Right cardiac atrium (tissue), 5 donors: ENCODE measurements at regions of chr11 and their contacts with region 1.

Region 1: GRCh38 chr11:1050581-1051355 is 14.2 kb upstream of the MUC6 start:
- DNase-seq: peak; percentile 59 to 84 (median 82)
- ATAC-seq: peak; percentile 83 to 84
- H3K4me3 ChIP-seq: no peak overlapping the region
- H3K27ac ChIP-seq: no peak overlapping the region
- H3K4me1 ChIP-seq: no peaks in the 10 kb centered on the region
- H3K27me3 ChIP-seq: no peaks in the 10 kb centered on the region

Region 2: GRCh38 chr11:848380-848931 is 202.3 kb before region 1 on chr11:
- intact Hi-C with region 1: loop called (anchors 2 to 10 kb)
- DNase-seq: peak in 2 of 3 donors; percentile 81 to 84
- ATAC-seq: no peak
- H3K4me3 ChIP-seq: no peak overlapping the region
- H3K27ac ChIP-seq: no peak overlapping the region
- H3K4me1 ChIP-seq: peaks cover 9% of the 10 kb centered on the region
- H3K27me3 ChIP-seq: no peaks in the 10 kb centered on the region

Region 3: GRCh38 chr11:859509-860131 is 191.1 kb before region 1 on chr11:
- intact Hi-C with region 1: loop called in 2 of 4 experiments (anchors 5 to 10 kb)
- DNase-seq: peak; percentile 89 to 96 (median 94)
- ATAC-seq: peak; percentile 62 to 74
- H3K4me3 ChIP-seq: no peak overlapping the region
- H3K27ac ChIP-seq: peak overlapping the region; percentile 1
- H3K4me1 ChIP-seq: peaks cover 2% of the 10 kb centered on the region
- H3K27me3 ChIP-seq: no peaks in the 10 kb centered on the region

Region 4: DNA sequence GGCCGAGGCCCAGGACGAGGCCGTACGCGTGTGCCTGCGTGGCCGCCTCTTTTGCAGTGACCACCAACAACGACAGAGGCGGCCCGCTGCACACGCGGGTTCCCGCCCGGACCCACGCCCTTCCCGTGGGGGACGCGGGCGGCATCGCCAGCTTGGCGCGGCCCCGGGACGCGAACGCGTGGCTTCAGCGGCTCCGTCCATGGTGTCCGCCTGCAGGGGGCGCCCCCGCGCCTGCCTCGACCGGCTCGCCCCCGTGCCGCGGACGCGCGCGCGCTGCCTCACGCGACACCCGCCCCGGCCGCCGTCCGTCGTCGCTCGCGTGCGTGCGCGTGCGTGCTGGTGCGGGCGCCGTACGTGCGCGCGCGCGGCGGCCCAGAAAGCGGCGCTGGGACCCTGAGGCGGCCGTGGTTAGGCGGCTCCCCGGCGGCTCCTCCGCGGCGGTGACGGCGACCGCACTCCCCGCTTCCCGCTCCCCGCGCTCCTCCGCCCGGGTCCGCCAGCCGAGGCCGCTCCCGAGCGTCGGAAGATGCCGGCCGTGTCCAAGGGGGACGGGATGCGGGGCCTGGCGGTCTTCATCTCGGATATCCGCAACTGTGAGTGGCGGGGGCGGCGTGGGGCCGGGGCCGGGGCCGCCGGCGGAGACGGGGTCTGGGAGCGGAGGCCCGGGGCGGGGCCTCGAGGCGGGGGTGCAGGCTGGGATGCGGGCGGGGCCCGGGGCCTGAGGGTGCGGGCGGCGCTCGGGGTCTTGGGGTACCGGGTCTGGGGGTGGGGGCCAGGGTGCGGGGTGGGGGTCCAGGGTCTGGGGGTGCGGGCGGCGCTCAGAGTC is 125.1 kb before region 1 on chr11 and contains the start of gene AP2A2:
- intact Hi-C with region 1: loop called in 1 of 4 experiments (anchors 10 kb)
- DNase-seq: peak; percentile 93 to 98 (median 97)
- ATAC-seq: peak; percentile 82 to 89
- H3K4me3 ChIP-seq: peak within 1 kb of the TSS; percentile 98
- H3K27ac ChIP-seq: peak within 1 kb of the TSS; percentile 93
- H3K4me1 ChIP-seq: peaks cover 5% of the 10 kb centered on the region
- H3K27me3 ChIP-seq: no peaks in the 10 kb centered on the region
- total RNA-seq, gene AP2A2: 45.8 to 55.0 (median 51.9) TPM